ENCODE measurements at regions of chr14 and their contacts with region 1.

Region 1: DNA sequence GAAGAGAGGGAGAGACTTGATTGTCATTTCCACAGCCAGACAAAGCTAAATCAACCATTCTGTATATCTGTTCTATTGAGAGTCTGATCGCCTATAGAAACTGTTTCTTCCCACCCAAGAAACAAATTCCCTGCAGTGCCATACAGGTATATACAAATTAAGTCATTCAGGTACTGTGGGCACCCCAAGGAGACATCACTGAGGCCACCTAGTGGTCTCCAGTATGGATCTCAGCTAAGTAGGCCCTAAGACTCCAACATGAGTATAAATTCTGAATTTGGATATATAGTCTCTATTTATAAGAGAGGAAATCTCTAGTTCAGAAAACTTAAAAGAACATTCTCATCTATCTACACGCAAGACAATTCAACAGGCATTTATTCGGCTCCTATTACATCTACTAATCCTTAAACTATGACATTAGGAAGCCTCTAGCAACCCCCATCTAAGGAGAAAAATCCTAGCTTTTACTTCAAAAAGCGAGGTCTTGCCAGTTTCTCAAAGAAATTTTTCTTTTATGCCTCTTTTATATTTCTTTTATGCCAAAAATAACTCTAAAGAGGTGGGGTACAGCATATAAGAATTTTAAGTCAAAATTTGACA is 62.6 kb downstream of the DCAF5 start:
- DNase-seq: peak; percentile 32
- H3K4me3 ChIP-seq: no peak overlapping the region
- H3K27ac ChIP-seq: peak overlapping the region in 1 of 2 experiments; percentile 90; a peak in 2 of 4 replicates
- H3K4me1 ChIP-seq: peaks cover 22 to 29% of the 10 kb centered on the region in 2 experiments
- H3K27me3 ChIP-seq: no peaks in the 10 kb centered on the region
- CTCF ChIP-seq: peak; percentile 87
- EP300 ChIP-seq: no peak
- RAD21 ChIP-seq: peak; percentile 77

Region 2: DNA sequence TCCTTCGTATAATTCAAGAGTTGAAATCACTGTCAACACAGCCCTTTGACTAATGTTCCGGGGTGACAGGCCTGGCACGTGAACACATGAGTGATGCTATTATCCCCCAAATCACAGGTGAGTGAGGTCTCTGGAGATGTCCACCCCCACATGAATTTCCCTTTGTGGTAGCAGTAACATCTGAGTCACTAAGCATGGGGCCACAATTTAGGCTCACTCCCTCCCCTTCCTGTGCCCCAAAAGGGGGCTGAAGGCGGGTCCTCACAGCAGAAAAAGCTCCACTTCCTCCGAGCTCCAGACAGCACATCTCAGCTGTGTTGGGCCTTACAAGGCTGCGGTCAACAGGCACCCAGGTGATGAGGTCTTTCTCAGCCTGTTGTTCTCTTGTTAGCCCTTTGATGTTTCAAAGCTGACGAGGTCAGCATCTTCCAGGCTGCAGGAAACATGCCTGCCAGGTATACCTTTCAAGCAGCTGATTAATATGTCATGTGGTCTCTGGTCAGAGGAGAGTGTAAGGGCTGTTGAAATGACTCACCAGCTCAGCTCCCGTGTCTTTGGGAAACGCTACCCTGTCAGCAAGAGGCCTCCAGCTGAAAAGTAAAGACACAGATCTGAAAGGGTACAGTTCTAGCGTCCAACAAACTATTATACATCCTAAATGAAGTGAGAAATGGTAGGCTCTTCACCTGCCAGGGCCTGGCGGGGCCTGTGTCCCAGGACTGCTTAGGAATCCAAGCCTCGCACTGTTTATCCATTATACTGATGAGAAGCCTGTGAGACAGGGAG is 404.7 kb before region 1 on chr14:
- CTCF ChIA-PET with region 1: no interaction called
- POLR2A ChIA-PET with region 1: no interaction called
- DNase-seq: no peak
- H3K4me3 ChIP-seq: no peak overlapping the region
- H3K27ac ChIP-seq: peak overlapping the region; percentile 67 to 97; a peak in 3 of 4 replicates
- H3K4me1 ChIP-seq: peaks cover 24 to 70% of the 10 kb centered on the region in 2 experiments; a peak in 3 of 4 replicates
- H3K27me3 ChIP-seq: no peaks in the 10 kb centered on the region
- CTCF ChIP-seq: no peak
- EP300 ChIP-seq: no peak; a peak in 1 of 4 replicates
- RAD21 ChIP-seq: no peak

Region 3: GRCh38 chr14:68977718-68978171 is 112.5 kb before region 1 on chr14:
- CTCF ChIA-PET with region 1: interaction called, 16 read pairs
- POLR2A ChIA-PET with region 1: interaction called, 3 read pairs
- DNase-seq: peak; percentile 82
- H3K4me3 ChIP-seq: peak overlapping the region; percentile 87 to 96
- H3K27ac ChIP-seq: peak overlapping the region; percentile 98
- H3K4me1 ChIP-seq: peaks cover 30 to 51% of the 10 kb centered on the region in 2 experiments
- H3K27me3 ChIP-seq: no peaks in the 10 kb centered on the region
- CTCF ChIP-seq: peak; percentile 25
- EP300 ChIP-seq: peak; percentile 38 to 69; a peak in 3 of 4 replicates
- RAD21 ChIP-seq: peak; percentile 22; the same call in 1 of the 2 replicates

Region 4: DNA sequence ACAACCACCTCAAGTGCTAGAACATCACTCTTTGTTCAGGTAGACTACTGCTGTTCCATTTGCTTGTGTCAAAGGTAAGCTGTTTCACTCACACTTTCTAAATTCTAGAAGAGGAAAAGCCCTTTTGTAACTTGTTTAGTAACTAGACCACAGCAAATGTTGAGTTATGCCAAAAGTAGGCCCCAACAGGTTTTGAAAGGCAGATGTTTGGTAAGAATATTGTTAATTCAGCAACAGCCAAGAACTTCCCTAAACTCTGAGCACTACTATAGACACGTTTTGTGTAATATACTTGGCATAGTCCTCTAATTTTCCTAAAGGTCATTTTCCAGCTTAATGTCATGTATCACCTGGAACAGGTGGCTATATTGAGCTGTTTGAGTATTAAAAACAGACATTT is 16.4 kb before region 1 on chr14:
- CTCF ChIA-PET with region 1: interaction called, 10 read pairs
- POLR2A ChIA-PET with region 1: no interaction called
- DNase-seq: no peak
- H3K4me3 ChIP-seq: no peak overlapping the region
- H3K27ac ChIP-seq: no peak overlapping the region
- H3K4me1 ChIP-seq: peaks cover 5 to 26% of the 10 kb centered on the region in 2 experiments; a peak in 3 of 4 replicates
- H3K27me3 ChIP-seq: no peaks in the 10 kb centered on the region
- CTCF ChIP-seq: no peak
- EP300 ChIP-seq: no peak
- RAD21 ChIP-seq: no peak

Region 5: GRCh38 chr14:69101331-69101826 is 11.1 kb after region 1 on chr14:
- CTCF ChIA-PET with region 1: interaction called, 18 read pairs
- POLR2A ChIA-PET with region 1: no interaction called
- DNase-seq: peak; percentile 20
- H3K4me3 ChIP-seq: no peak overlapping the region; a peak in 1 of 4 replicates
- H3K27ac ChIP-seq: peak overlapping the region in 1 of 2 experiments; percentile 57; a peak in 2 of 4 replicates
- H3K4me1 ChIP-seq: peaks cover 0 to 4% of the 10 kb centered on the region in 2 experiments; a peak in 2 of 4 replicates
- H3K27me3 ChIP-seq: no peaks in the 10 kb centered on the region
- CTCF ChIP-seq: peak; percentile 75
- EP300 ChIP-seq: no peak
- RAD21 ChIP-seq: peak; percentile 53